ENCODE measurements at regions of chr4 and their contacts with region 1.

Region 1: DNA sequence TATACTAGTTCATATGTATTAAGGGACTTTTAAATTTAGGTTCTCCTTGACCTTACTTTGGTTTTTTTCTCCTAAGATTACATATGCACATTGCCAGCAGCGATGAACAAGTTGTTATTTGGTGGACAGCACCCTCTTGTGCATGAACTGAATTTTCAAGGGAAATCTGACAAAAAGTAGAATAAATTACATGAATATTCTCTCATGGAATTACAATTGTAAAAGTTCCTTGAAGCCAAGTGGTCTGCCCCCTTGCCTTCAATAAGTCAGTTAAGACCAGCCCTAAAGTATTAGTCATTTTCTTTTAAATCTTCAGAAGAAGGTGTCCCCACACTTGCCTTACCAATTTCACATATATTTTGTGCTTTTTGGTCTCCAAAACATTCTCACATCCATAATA is 30.7 kb upstream of the SMARCA5 start:
- DNase-seq: no peak
- ATAC-seq: no peak
- H3K4me3 Mint-ChIP-seq: no peak overlapping the region
- H3K27ac Mint-ChIP-seq: no peak overlapping the region
- H3K4me1 Mint-ChIP-seq: no peaks in the 10 kb centered on the region
- H3K27me3 Mint-ChIP-seq: peaks cover 6% of the 10 kb centered on the region
- CTCF ChIP-seq: no peak

Region 2: DNA sequence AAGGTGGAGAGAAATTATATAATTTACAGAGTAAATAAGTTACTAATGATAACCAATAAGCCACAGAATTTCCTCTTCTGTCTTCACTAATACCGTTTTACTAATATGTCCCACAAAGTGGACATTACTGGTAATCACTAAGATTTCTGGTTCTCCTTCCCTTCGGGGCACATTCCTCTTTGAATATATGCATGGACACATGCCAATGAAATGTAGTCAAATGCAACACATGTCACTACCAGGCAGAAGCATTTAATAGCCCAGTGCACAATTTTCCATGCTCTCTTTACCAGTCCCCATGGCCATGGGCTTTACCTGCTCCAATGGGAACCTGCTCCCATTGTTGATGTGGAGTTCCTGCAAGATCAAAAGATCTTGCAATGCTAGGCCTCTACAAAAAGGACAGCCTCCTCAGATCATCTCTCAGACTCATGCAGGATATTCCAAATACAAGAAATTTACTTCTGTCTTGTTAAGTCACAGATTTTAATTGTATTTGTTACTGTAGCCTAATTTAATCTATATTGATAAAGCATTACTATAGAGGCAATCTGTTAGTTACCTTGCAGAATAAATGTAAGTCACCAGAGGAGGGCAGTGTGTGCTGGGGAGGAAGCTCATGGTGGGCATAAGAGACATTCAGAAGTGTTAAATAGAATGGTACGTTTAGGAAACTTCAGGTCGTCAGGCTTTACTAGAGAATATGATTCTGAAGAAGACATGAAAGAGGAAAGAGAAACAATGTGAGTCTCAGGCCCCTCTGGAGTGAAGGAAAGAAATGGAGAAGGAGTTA is 599.6 kb before region 1 on chr4:
- CTCF ChIA-PET with region 1: no interaction called
- POLR2A ChIA-PET with region 1: no interaction called
- intact Hi-C with region 1: loop called (anchors 2 kb)
- DNase-seq: no peak
- ATAC-seq: no peak
- H3K4me3 Mint-ChIP-seq: no peak overlapping the region
- H3K27ac Mint-ChIP-seq: no peak overlapping the region
- H3K4me1 Mint-ChIP-seq: no peaks in the 10 kb centered on the region
- H3K27me3 Mint-ChIP-seq: no peaks in the 10 kb centered on the region
- CTCF ChIP-seq: no peak

Region 3: GRCh38 chr4:143207557-143207956 is 275.3 kb before region 1 on chr4:
- CTCF ChIA-PET with region 1: interaction called, 3 read pairs
- POLR2A ChIA-PET with region 1: no interaction called
- intact Hi-C with region 1: loop called (anchors 1 kb)
- DNase-seq: no peak
- ATAC-seq: no peak
- H3K4me3 Mint-ChIP-seq: no peak overlapping the region
- H3K27ac Mint-ChIP-seq: no peak overlapping the region
- H3K4me1 Mint-ChIP-seq: no peaks in the 10 kb centered on the region
- H3K27me3 Mint-ChIP-seq: no peaks in the 10 kb centered on the region
- CTCF ChIP-seq: no peak

Region 4: DNA sequence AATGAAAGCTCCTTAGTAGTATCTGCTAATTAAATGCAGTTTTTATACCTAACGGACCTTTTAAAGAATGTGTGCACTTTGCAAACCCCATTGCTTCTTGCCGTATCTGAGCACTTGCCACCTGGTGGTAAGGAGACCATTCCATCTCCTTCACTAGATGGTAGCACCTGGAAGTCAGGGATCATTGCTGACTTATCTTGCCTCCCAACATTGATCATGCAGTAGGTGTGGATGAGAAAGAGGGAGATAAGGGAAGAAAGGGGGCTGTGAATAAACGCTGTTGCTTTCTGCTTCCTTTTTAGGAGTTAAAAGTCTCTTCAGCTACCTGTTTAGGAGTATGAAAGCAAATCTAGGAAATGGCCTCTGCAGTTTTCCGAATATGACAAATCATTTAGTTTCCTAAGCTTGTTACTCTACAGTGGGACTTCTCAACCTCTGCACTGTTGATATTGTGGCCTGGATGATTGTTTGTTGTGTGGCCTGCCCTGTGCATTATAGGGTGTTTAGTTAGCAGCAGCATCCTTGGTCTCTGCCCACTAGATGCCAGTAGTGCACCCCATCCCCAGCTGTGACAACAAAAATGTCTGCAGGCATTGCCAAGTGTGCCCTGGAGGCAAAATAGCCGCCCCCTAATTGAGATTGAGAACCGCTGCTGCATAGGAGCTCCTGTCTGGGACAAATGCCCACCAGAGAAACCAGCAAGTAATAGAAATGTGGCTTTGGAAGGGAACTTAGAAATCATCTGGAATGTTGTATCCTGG is 107.3 kb before region 1 on chr4:
- CTCF ChIA-PET with region 1: interaction called, 14 read pairs
- POLR2A ChIA-PET with region 1: no interaction called
- intact Hi-C with region 1: loop called (anchors 1 kb)
- DNase-seq: no peak
- ATAC-seq: peak; percentile 61
- H3K4me3 Mint-ChIP-seq: no peak overlapping the region
- H3K27ac Mint-ChIP-seq: peak overlapping the region; percentile 86
- H3K4me1 Mint-ChIP-seq: peaks cover 68% of the 10 kb centered on the region
- H3K27me3 Mint-ChIP-seq: no peaks in the 10 kb centered on the region
- CTCF ChIP-seq: no peak